ENCODE measurements at regions of chr1 and their contacts with region 1.

Region 1: DNA sequence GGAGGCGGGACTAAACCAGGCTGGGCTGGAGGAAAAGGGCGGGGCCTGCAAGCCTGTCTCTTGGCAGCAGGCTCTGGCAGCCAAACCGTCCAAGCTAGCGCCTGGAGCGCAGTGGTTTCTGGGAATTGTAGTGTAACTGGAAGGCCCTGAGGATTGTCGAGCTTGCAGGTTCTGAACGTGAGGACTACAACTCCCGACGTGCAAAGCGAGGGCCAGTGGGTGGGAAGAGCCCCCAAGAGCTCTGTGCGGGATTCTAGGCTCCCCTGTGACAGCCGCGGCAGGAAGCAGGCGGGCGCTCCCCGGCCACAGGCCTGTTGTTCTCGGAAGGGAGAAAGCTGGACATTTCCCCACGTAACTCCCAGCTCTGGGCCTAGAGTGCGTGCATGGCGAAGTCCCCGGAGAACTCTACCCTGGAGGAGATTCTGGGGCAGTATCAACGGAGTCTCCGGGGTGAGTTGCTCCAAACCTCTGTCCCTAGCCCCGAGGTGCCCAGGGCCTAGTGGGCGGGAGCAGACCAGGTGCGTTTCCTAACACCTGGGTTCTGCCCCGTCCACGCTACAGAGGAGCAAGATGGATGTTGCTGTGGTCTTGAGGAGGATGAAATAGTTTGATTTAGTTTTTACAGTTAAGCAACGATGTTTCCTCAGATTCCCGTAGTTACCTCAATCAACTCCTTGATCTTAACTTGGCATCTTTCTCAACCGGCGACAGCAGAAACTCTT is at the start of gene SDCCAG8:
- DNase-seq: peak; percentile 100
- H3K4me3 ChIP-seq: peak within 1 kb of the TSS; percentile 88
- H3K27ac ChIP-seq: peak within 1 kb of the TSS; percentile 95
- H3K27me3 ChIP-seq: no peaks in the 10 kb centered on the region
- CTCF ChIP-seq: no peak
- polyA plus RNA-seq, gene SDCCAG8: 29.9 and 34.1 TPM in 2 replicates

Region 2: GRCh38 chr1:243234978-243235647 is 20.8 kb before region 1 on chr1:
- CTCF ChIA-PET with region 1: no interaction called
- POLR2A ChIA-PET with region 1: interaction called, 12 read pairs
- DNase-seq: peak; percentile 23
- H3K4me3 ChIP-seq: no peak overlapping the region
- H3K27ac ChIP-seq: no peak overlapping the region
- H3K27me3 ChIP-seq: no peaks in the 10 kb centered on the region
- CTCF ChIP-seq: no peak

Region 3: DNA sequence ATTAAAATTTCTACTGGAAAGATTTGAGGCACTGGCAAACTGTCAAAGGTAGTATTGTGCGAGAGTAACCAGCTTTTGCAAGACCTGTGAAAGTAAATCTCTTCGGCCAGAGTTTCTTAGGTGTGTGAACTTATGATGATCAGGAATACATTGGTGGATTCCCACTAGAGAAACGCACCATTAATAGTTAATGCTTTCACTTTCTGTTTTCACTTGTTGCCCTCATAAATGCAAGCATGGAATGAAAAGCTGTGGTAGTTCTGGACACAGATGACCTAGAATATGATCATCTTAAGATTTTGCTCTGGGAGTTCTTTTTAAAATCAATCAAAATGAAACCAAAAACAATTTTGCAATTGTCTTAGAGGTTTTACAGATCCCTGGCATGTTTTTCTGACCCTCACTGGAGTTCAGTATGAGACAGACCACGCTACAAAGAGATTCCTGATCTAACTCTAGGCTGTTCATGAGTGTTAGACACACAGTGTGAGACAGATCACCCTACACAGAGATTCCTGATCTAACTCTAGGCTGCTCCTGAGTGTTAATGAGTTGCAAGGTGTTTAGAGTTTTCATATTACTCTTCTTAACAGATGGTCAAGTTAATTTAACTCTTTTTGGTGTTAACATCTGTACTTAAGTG is 98.7 kb after region 1 on chr1:
- CTCF ChIA-PET with region 1: no interaction called
- POLR2A ChIA-PET with region 1: no interaction called
- DNase-seq: no peak
- H3K4me3 ChIP-seq: no peak overlapping the region
- H3K27ac ChIP-seq: no peak overlapping the region
- H3K27me3 ChIP-seq: no peaks in the 10 kb centered on the region
- CTCF ChIP-seq: no peak